Heart left ventricle (tissue), 16 donors: ENCODE measurements at regions of chr5 and their contacts with region 1.

Region 1: GRCh38 chr5:32174011-32174870 is at the start of gene GOLPH3:
- DNase-seq: peak; percentile 95 to 98 (median 96)
- ATAC-seq: peak; percentile 90 to 97 (median 96)
- H3K4me3 ChIP-seq: peak within 1 kb of the TSS; percentile 60 to 99 (median 96)
- H3K27ac ChIP-seq: peak within 1 kb of the TSS; percentile 95 to 100 (median 100)
- H3K4me1 ChIP-seq: peaks cover 0 to 46% (median 28%) of the 10 kb centered on the region in 12 donors
- H3K27me3 ChIP-seq: no peaks in the 10 kb centered on the region
- CTCF ChIP-seq: peak in 3 of 12 donors; percentile 11 to 18 (median 17)
- POLR2A ChIP-seq: peak; percentile 46 to 91
- total RNA-seq, gene GOLPH3: 34.4 to 73.4 (median 50.1) TPM

Region 2: GRCh38 chr5:32100230-32100629 is 74.0 kb before region 1 on chr5:
- intact Hi-C with region 1: loop called in 5 of 10 experiments (anchors 5 kb)
- DNase-seq: no peak
- ATAC-seq: peak in 1 of 4 donors; percentile 31
- H3K4me3 ChIP-seq: no peak overlapping the region
- H3K27ac ChIP-seq: peak overlapping the region in 11 of 12 donors; percentile 48 to 80 (median 63)
- H3K4me1 ChIP-seq: peaks cover 3 to 40% (median 23%) of the 10 kb centered on the region in 12 donors
- H3K27me3 ChIP-seq: no peaks in the 10 kb centered on the region
- CTCF ChIP-seq: no peak
- POLR2A ChIP-seq: no peak

Region 3: DNA sequence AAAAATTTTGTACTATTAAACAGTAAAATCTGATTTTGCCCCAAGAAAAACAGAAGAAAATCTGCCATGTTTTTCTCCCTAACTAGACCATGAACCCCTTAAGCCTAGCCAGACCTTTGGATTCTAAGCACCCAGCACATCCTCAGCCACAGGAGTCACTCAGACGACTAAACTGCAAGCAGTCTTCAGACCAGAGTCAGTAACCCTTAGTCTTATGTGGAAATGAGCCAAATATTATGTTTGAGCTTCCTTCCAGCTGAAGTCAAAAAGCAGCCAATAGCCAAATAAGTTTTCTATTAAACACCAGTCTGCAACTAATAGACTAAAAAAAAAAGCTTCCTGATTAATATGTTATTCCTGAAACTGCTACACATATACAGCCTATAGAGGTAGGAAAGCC is 47.5 kb before region 1 on chr5:
- intact Hi-C with region 1: loop called in 1 of 10 experiments (anchors 5 kb)
- DNase-seq: no peak
- ATAC-seq: no peak
- H3K4me3 ChIP-seq: no peak overlapping the region
- H3K27ac ChIP-seq: no peak overlapping the region
- H3K4me1 ChIP-seq: peaks cover 0 to 50% (median 37%) of the 10 kb centered on the region in 12 donors
- H3K27me3 ChIP-seq: no peaks in the 10 kb centered on the region
- CTCF ChIP-seq: no peak
- POLR2A ChIP-seq: no peak

Region 4: DNA sequence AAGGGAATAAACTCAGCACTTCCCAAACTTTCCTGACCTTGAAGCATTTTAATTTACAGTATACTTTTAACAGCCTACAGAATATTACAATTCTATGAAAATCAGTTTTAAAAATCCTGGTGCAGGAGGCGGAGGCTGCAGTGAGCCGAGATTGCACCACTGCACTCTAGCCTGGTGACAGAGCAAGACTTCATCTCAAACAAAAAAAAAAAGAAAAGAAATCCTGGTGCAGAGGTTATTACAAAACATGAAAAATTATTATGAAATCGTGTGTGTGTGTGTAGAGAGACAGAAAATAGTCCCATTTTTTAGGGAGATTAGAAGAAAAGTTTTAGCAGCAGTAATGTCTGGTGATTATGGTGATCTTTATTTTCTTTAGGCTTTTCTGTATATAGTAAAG is 27.0 kb before region 1 on chr5:
- intact Hi-C with region 1: no loop called
- DNase-seq: no peak
- ATAC-seq: peak in 2 of 4 donors; percentile 18 to 24
- H3K4me3 ChIP-seq: no peak overlapping the region
- H3K27ac ChIP-seq: no peak overlapping the region
- H3K4me1 ChIP-seq: peaks cover 15 to 87% (median 75%) of the 10 kb centered on the region in 12 donors
- H3K27me3 ChIP-seq: no peaks in the 10 kb centered on the region
- CTCF ChIP-seq: no peak
- POLR2A ChIP-seq: no peak

Region 5: GRCh38 chr5:32223946-32224608 is 49.8 kb after region 1 on chr5:
- intact Hi-C with region 1: loop called in 2 of 10 experiments (anchors 2 to 5 kb)
- DNase-seq: no peak
- ATAC-seq: peak; percentile 66 to 79 (median 72)
- H3K4me3 ChIP-seq: no peak overlapping the region
- H3K27ac ChIP-seq: peak overlapping the region in 9 of 12 donors; percentile 43 to 85 (median 62)
- H3K4me1 ChIP-seq: peaks cover 0 to 20% (median 6%) of the 10 kb centered on the region in 12 donors
- H3K27me3 ChIP-seq: no peaks in the 10 kb centered on the region
- CTCF ChIP-seq: no peak
- POLR2A ChIP-seq: no peak

Region 6: GRCh38 chr5:32312647-32313523 is 138.6 kb after region 1 on chr5 and contains the start of gene MTMR12:
- intact Hi-C with region 1: loop called in 2 of 10 experiments (anchors 1 to 2 kb)
- DNase-seq: peak; percentile 100
- ATAC-seq: peak; percentile 99 to 100 (median 99)
- H3K4me3 ChIP-seq: peak within 1 kb of the TSS; percentile 70 to 100 (median 90)
- H3K27ac ChIP-seq: peak within 1 kb of the TSS; percentile 95 to 100 (median 98)
- H3K4me1 ChIP-seq: peaks cover 4 to 48% (median 34%) of the 10 kb centered on the region in 12 donors
- H3K27me3 ChIP-seq: no peaks in the 10 kb centered on the region
- CTCF ChIP-seq: peak in 2 of 12 donors; percentile 6 to 11
- POLR2A ChIP-seq: peak; percentile 85 to 90
- total RNA-seq, gene MTMR12: 13.3 to 28.7 (median 21.3) TPM

Region 7: GRCh38 chr5:32339198-32339597 is 165.0 kb after region 1 on chr5:
- intact Hi-C with region 1: no loop called
- DNase-seq: no peak
- ATAC-seq: no peak
- H3K4me3 ChIP-seq: no peak overlapping the region
- H3K27ac ChIP-seq: no peak overlapping the region
- H3K4me1 ChIP-seq: no peaks in the 10 kb centered on the region
- H3K27me3 ChIP-seq: no peaks in the 10 kb centered on the region
- CTCF ChIP-seq: no peak
- POLR2A ChIP-seq: no peak

Region 8: DNA sequence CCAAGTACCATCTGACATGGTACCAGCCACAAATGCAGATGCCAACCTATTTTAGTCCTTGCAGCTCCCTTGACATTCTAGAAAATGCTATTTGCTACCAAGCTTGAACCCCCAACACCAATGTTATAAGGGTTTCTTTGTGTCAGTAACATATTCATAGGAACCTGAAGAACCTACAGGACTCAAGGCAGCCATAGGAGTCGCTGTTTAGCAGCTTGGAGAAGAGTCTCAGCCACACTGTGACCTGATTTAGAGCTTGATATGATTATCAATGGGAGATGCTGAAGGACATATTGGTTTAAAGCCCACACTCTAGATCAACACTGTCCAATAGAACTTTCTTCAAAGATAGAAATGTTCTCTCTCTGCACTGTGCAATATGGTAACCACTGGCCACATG is 276.7 kb after region 1 on chr5:
- intact Hi-C with region 1: no loop called
- DNase-seq: no peak
- ATAC-seq: no peak
- H3K4me3 ChIP-seq: no peak overlapping the region
- H3K27ac ChIP-seq: no peak overlapping the region
- H3K4me1 ChIP-seq: peaks cover 0 to 5% (median 0%) of the 10 kb centered on the region in 12 donors
- H3K27me3 ChIP-seq: no peaks in the 10 kb centered on the region
- CTCF ChIP-seq: no peak
- POLR2A ChIP-seq: no peak